SK-N-SH (cell line): ENCODE measurements at regions of chr7 and their contacts with region 1.

Region 1: GRCh38 chr7:99312316-99313203 is 13.1 kb upstream of the ARPC1A start:
- DNase-seq: peak; percentile 78
- H3K4me3 ChIP-seq: peak overlapping the region in 1 of 2 experiments; percentile 4; a peak in 1 of 4 replicates
- H3K27ac ChIP-seq: no peak overlapping the region
- H3K4me1 ChIP-seq: no peaks in the 10 kb centered on the region
- H3K27me3 ChIP-seq: no peaks in the 10 kb centered on the region
- CTCF ChIP-seq: peak; percentile 99
- EP300 ChIP-seq: no peak
- RAD21 ChIP-seq: peak; percentile 94

Region 2: GRCh38 chr7:99029466-99030435 is 282.8 kb before region 1 on chr7:
- CTCF ChIA-PET with region 1: interaction called, 11 read pairs
- POLR2A ChIA-PET with region 1: no interaction called
- DNase-seq: no peak
- H3K4me3 ChIP-seq: no peak overlapping the region; a peak in 1 of 4 replicates
- H3K27ac ChIP-seq: no peak overlapping the region
- H3K4me1 ChIP-seq: peaks cover 0 to 6% of the 10 kb centered on the region in 2 experiments; a peak in 1 of 4 replicates
- H3K27me3 ChIP-seq: no peaks in the 10 kb centered on the region
- CTCF ChIP-seq: no peak
- EP300 ChIP-seq: no peak
- RAD21 ChIP-seq: no peak

Region 3: DNA sequence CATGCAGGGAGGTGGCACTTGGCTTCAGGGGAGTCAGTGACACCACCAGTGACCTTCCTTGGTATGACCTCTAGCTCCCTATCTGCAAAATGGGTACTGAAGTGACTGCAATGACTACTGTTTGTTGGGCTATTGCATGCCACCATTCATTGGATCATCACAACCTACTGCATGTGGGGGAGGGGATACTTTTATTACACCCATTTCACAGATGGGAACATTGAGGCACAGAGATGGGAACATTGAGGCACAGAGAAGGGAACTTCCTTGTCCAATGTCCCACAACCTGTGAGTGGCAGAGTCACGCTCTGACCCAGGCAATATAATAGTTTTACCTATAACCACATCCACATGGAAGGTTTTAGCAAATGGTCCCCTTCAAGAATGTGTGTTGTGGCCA is 52.2 kb before region 1 on chr7:
- CTCF ChIA-PET with region 1: no interaction called
- POLR2A ChIA-PET with region 1: no interaction called
- DNase-seq: no peak
- H3K4me3 ChIP-seq: no peak overlapping the region
- H3K27ac ChIP-seq: no peak overlapping the region
- H3K4me1 ChIP-seq: no peaks in the 10 kb centered on the region
- H3K27me3 ChIP-seq: no peaks in the 10 kb centered on the region
- CTCF ChIP-seq: no peak
- EP300 ChIP-seq: no peak
- RAD21 ChIP-seq: no peak

Region 4: GRCh38 chr7:99325545-99326407 is 13.2 kb after region 1 on chr7 and contains the start of gene ARPC1A:
- CTCF ChIA-PET with region 1: interaction called, 25 read pairs
- POLR2A ChIA-PET with region 1: interaction called, 3 read pairs
- DNase-seq: peak; percentile 100
- H3K4me3 ChIP-seq: peak within 1 kb of the TSS; percentile 81 to 98
- H3K27ac ChIP-seq: peak within 1 kb of the TSS; percentile 58 to 87; a peak in 3 of 4 replicates
- H3K4me1 ChIP-seq: peaks cover 6 to 9% of the 10 kb centered on the region in 2 experiments; a peak in 3 of 4 replicates
- H3K27me3 ChIP-seq: no peaks in the 10 kb centered on the region
- CTCF ChIP-seq: peak; percentile 46
- EP300 ChIP-seq: peak in 1 of 2 experiments; percentile 32; a peak in 1 of 4 replicates
- RAD21 ChIP-seq: peak; percentile 9; the same call in 1 of the 2 replicates
- polyA plus RNA-seq, gene ARPC1A: 262 and 306 TPM in 2 replicates

Region 5: GRCh38 chr7:99344061-99344647 is 31.6 kb after region 1 on chr7:
- CTCF ChIA-PET with region 1: no interaction called
- POLR2A ChIA-PET with region 1: no interaction called
- DNase-seq: no peak
- H3K4me3 ChIP-seq: no peak overlapping the region
- H3K27ac ChIP-seq: no peak overlapping the region
- H3K4me1 ChIP-seq: no peaks in the 10 kb centered on the region
- H3K27me3 ChIP-seq: no peaks in the 10 kb centered on the region
- CTCF ChIP-seq: no peak
- EP300 ChIP-seq: no peak
- RAD21 ChIP-seq: no peak